A673 (cell line): ENCODE measurements at regions of chr2 and their contacts with region 1.

Region 1: GRCh38 chr2:127953128-127953718 is 67.5 kb upstream of the AMMECR1L start:
- DNase-seq: no peak
- H3K4me3 ChIP-seq: no peak overlapping the region
- H3K27ac ChIP-seq: peak overlapping the region; percentile 12
- H3K4me1 ChIP-seq: no peaks in the 10 kb centered on the region
- H3K27me3 ChIP-seq: no peaks in the 10 kb centered on the region
- CTCF ChIP-seq: no peak

Region 2: DNA sequence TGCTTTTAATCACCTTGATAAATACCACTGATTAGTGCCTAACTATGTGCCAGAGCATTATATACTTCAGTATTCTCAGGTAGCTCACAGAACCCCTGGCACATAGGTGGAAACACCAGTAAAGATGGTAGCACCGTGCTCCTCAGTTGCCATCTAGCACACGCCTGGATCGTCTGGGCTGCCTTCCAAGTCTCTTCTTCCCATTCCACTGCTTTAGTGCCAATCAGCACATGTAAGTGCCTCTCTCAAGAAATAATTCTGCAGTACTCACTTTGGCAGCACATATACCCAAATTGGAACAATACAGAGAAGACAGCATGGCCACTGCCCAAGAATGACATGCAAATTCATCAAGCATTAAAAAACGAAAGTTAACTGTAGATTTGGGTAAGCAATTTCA is 108.2 kb before region 1 on chr2:
- CTCF ChIA-PET with region 1: no interaction called
- POLR2A ChIA-PET with region 1: interaction called, 11 read pairs
- intact Hi-C with region 1: no loop called
- DNase-seq: no peak
- H3K4me3 ChIP-seq: no peak overlapping the region
- H3K27ac ChIP-seq: no peak overlapping the region
- H3K4me1 ChIP-seq: no peaks in the 10 kb centered on the region
- H3K27me3 ChIP-seq: no peaks in the 10 kb centered on the region
- CTCF ChIP-seq: no peak

Region 3: DNA sequence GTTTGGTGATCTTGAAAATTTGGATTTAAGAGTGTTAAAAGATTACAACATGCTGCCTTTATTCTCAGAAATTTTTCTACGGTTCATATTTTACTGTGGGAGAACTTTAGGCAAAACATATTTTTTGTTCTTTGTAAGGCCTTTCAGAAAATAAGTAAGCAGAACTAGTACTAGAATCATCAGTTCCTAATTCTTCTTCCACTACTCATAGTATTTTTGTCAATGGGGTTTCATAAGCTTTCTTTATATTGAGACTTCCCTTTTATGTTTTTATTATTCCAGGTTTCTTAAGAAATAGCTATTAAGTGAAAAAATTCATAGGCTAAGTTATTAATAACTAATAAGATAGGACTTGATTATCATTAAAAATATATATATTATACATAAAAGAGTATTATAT is 150.2 kb after region 1 on chr2:
- CTCF ChIA-PET with region 1: no interaction called
- POLR2A ChIA-PET with region 1: no interaction called
- intact Hi-C with region 1: no loop called
- DNase-seq: no peak
- H3K4me3 ChIP-seq: no peak overlapping the region
- H3K27ac ChIP-seq: no peak overlapping the region
- H3K4me1 ChIP-seq: peaks cover 6% of the 10 kb centered on the region
- H3K27me3 ChIP-seq: no peaks in the 10 kb centered on the region
- CTCF ChIP-seq: no peak